Heart left ventricle (tissue), 16 donors: ENCODE measurements at regions of chr2 and their contacts with region 1.

Region 1: GRCh38 chr2:238379096-238379810 is 47.5 kb upstream of the ASB1 start:
- DNase-seq: no peak
- ATAC-seq: peak in 3 of 4 donors; percentile 21 to 52 (median 28)
- H3K4me3 ChIP-seq: no peak overlapping the region
- H3K27ac ChIP-seq: peak overlapping the region in 10 of 12 donors; percentile 11 to 76 (median 62)
- H3K4me1 ChIP-seq: peaks cover 0 to 62% (median 15%) of the 10 kb centered on the region in 12 donors
- H3K27me3 ChIP-seq: no peaks in the 10 kb centered on the region
- CTCF ChIP-seq: no peak
- POLR2A ChIP-seq: no peak

Region 2: GRCh38 chr2:238449909-238450417 is 70.7 kb after region 1 on chr2:
- intact Hi-C with region 1: loop called in 1 of 10 experiments (anchors 5 kb)
- DNase-seq: peak; percentile 63 to 88 (median 70)
- ATAC-seq: peak; percentile 90 to 94 (median 93)
- H3K4me3 ChIP-seq: peak overlapping the region in 2 of 12 donors; percentile 4 to 30
- H3K27ac ChIP-seq: peak overlapping the region; percentile 35 to 79 (median 56)
- H3K4me1 ChIP-seq: peaks cover 0 to 30% (median 13%) of the 10 kb centered on the region in 12 donors
- H3K27me3 ChIP-seq: no peaks in the 10 kb centered on the region
- CTCF ChIP-seq: no peak
- POLR2A ChIP-seq: no peak

Region 3: GRCh38 chr2:238483656-238484055 is 104.4 kb after region 1 on chr2:
- intact Hi-C with region 1: no loop called
- DNase-seq: no peak
- ATAC-seq: no peak
- H3K4me3 ChIP-seq: no peak overlapping the region
- H3K27ac ChIP-seq: no peak overlapping the region
- H3K4me1 ChIP-seq: no peaks in the 10 kb centered on the region
- H3K27me3 ChIP-seq: no peaks in the 10 kb centered on the region
- CTCF ChIP-seq: no peak
- POLR2A ChIP-seq: no peak